A549 (cell line): ENCODE measurements at regions of chr12 and their contacts with region 1.

Region 1: DNA sequence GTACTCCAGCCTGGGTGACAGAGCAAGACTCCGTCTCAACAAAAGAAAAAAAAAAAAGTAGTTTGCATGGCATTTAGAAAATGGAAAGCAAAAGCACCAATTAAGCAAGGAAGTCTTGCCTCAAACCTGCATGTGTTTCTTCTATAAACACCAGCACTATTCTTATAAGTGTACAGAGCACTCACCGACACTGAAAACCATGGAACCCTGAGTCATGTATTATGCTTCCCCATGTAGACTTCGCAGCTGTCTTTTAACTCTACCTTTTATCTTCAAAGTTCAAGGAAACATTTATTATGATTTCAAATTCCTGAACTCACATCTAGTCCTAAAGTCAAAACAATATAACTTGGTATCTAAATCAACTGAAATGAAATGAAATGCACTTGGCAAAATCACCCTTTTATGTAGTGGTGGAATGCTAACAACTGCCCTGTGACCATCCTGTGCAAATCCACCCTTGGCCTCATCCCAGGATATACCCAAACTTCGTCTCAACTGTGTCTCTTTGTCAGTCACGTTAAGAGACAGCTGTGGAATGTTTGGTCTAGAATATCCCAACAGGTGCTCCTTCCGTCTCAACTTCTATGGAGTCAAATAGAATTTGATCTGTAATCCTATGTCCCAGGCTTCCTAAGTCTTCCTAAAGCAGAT is 4.8 kb downstream of the BCAT1 start:
- DNase-seq: no peak
- ATAC-seq: no peak
- H3K4me3 ChIP-seq: no peak overlapping the region
- H3K27ac ChIP-seq: no peak overlapping the region
- H3K4me1 ChIP-seq: peaks cover 5% of the 10 kb centered on the region; the same call in 1 of the 3 replicates
- CTCF ChIP-seq: no peak
- EP300 ChIP-seq: no peak
- POLR2A ChIP-seq: no peak
- RAD21 ChIP-seq: no peak

Region 2: GRCh38 chr12:24931666-24932405 is 12.2 kb before region 1 on chr12:
- CTCF ChIA-PET with region 1: interaction called, 12 read pairs
- POLR2A ChIA-PET with region 1: no interaction called
- DNase-seq: no peak
- ATAC-seq: no peak
- H3K4me3 ChIP-seq: no peak overlapping the region
- H3K27ac ChIP-seq: no peak overlapping the region
- H3K4me1 ChIP-seq: no peaks in the 10 kb centered on the region
- CTCF ChIP-seq: no peak
- EP300 ChIP-seq: no peak
- POLR2A ChIP-seq: no peak
- RAD21 ChIP-seq: no peak